Panc1 (cell line): ENCODE measurements at regions of chr2 and their contacts with region 1.

Region 1: DNA sequence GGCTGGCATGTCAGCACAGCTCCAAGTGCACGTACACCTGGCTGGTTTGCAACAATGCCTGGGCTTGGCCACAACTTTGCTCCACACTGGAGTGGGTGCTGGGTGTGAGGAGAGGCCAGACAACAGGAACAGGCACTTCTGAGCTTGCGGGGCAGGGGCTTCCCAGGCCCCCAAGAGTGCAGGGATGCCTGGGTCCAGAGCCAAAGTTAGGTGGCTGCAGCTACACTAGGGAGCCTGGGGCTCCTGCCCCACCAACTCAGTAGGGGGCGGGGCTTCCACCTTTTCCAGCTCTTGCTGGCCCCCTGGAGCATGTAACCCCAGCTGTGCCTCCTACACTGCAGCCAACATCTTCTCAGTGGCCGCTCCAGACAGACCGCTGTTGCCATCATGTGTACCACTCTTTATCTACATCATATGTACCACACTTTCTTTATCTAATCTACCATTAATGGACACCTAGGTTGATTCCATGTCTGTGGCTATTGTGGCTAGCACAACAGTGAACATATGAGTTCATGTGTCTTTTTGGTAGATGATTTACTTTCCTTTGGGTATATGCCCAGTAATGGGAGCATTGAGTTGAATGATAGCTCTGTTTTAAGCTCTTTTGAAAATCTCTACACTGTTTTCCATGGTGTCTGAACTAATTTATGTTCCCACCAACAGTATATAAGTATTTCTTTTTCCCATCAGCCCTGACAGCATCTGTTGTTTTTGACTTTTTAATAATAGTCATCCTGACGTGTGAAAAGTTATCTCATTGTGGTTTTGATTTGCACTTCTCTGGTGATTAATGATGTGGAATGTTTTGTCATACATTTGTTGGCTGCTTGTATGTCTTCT is 87.9 kb downstream of the ZNF804A start:
- DNase-seq: no peak
- ATAC-seq: no peak
- H3K4me3 ChIP-seq: no peak overlapping the region
- H3K27ac ChIP-seq: no peak overlapping the region
- H3K4me1 ChIP-seq: no peaks in the 10 kb centered on the region
- H3K27me3 ChIP-seq: no peaks in the 10 kb centered on the region
- CTCF ChIP-seq: no peak

Region 2: DNA sequence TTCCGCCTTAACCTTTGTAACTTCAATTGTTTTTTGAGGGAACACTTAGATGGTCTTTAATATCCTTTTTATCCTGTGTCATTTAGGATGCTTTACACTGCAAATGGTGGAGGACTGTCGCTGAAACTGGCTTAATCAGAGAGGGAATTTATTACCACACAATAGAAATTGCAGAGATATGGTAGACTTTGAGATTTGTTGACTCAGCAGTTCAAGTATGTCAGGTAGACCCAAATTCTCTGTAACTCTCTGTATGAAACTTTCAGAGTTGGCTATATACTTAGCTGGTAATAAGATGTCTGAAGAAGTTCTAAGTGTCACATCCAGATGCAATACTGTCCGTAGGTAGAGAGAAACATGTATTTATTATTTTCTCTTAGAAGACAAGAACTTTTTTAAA is 12.3 kb after region 1 on chr2:
- CTCF ChIA-PET with region 1: no interaction called
- POLR2A ChIA-PET with region 1: interaction called, 14 read pairs
- in situ Hi-C with region 1: no loop called
- intact Hi-C with region 1: no loop called
- DNase-seq: no peak
- ATAC-seq: no peak
- H3K4me3 ChIP-seq: no peak overlapping the region
- H3K27ac ChIP-seq: no peak overlapping the region
- H3K4me1 ChIP-seq: no peaks in the 10 kb centered on the region
- H3K27me3 ChIP-seq: no peaks in the 10 kb centered on the region
- CTCF ChIP-seq: no peak

Region 3: GRCh38 chr2:184765112-184765895 is 79.1 kb after region 1 on chr2:
- CTCF ChIA-PET with region 1: no interaction called
- POLR2A ChIA-PET with region 1: no interaction called
- in situ Hi-C with region 1: no loop called
- intact Hi-C with region 1: loop called (anchors 10 kb)
- DNase-seq: no peak
- ATAC-seq: no peak
- H3K4me3 ChIP-seq: peak overlapping the region; percentile 34 to 35
- H3K27ac ChIP-seq: no peak overlapping the region; the same call in 1 of the 2 replicates
- H3K4me1 ChIP-seq: no peaks in the 10 kb centered on the region
- H3K27me3 ChIP-seq: no peaks in the 10 kb centered on the region
- CTCF ChIP-seq: no peak

Region 4: DNA sequence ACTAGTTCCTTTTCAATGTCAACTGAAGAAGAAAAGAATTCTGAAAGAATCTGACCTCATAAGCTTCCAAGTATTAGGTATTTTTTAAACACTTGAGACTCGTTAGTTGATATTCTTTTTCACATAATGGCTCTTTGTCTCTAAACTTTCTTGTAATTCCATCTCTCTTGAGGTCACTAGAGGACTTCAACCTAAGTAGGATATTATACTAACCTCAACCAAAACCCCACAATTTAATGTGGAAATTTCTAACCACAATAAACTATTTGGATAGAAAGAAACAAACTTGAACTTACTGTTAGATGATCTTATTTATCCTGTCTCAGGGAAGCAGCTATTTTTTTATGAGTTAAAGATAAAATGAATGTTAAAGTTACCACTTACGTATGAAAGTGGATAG is 845.5 kb after region 1 on chr2:
- CTCF ChIA-PET with region 1: no interaction called
- POLR2A ChIA-PET with region 1: no interaction called
- in situ Hi-C with region 1: no loop called
- intact Hi-C with region 1: no loop called
- DNase-seq: no peak
- ATAC-seq: no peak
- H3K4me3 ChIP-seq: no peak overlapping the region
- H3K27ac ChIP-seq: no peak overlapping the region
- H3K4me1 ChIP-seq: no peaks in the 10 kb centered on the region
- H3K27me3 ChIP-seq: no peaks in the 10 kb centered on the region
- CTCF ChIP-seq: no peak